A673 (cell line): ENCODE measurements at regions of chr12 and their contacts with region 1.

Region 1: DNA sequence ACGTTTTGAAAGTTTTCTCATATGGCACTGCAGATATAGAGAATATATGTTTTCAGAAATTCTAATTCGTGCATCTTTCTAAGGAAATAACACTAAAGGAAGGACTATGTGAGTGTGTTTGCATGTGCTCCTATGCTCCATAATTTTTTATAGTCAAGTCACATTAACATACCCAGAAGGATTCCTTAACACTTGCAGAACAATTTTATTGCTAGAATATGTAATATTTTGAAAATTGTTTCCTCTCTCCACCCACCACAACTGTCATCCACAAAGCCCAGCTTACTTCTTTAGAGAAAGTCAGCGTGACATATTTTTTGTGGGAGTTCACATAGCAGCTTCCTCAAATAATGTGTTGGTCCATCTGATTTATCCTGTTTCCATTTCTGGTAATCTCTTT is 604.6 kb upstream of the MGAT4C start:
- DNase-seq: no peak
- H3K4me3 ChIP-seq: no peak overlapping the region
- H3K27ac ChIP-seq: no peak overlapping the region
- H3K4me1 ChIP-seq: no peaks in the 10 kb centered on the region
- H3K27me3 ChIP-seq: no peaks in the 10 kb centered on the region
- CTCF ChIP-seq: no peak

Region 2: GRCh38 chr12:86838711-86839110 is 22.1 kb before region 1 on chr12:
- CTCF ChIA-PET with region 1: no interaction called
- POLR2A ChIA-PET with region 1: no interaction called
- intact Hi-C with region 1: loop called (anchors 2 kb)
- DNase-seq: peak; percentile 1
- H3K4me3 ChIP-seq: no peak overlapping the region
- H3K27ac ChIP-seq: no peak overlapping the region
- H3K4me1 ChIP-seq: no peaks in the 10 kb centered on the region
- H3K27me3 ChIP-seq: no peaks in the 10 kb centered on the region
- CTCF ChIP-seq: no peak